ENCODE measurements at regions of chr11 and their contacts with region 1.

Region 1: GRCh38 chr11:125592305-125593112 is at the start of gene STT3A:
- DNase-seq: peak; percentile 98 to 99 (median 99)
- H3K4me3 ChIP-seq: peak within 1 kb of the TSS; percentile 97 to 98
- H3K4me3 Mint-ChIP-seq: peak within 1 kb of the TSS; percentile 92 to 98 (median 94)
- H3K27ac ChIP-seq: peak within 1 kb of the TSS; percentile 96
- H3K27ac Mint-ChIP-seq: peak within 1 kb of the TSS; percentile 94 to 100 (median 98)
- H3K4me1 ChIP-seq: peaks cover 38% of the 10 kb centered on the region
- H3K4me1 Mint-ChIP-seq: peaks cover 32 to 59% (median 45%) of the 10 kb centered on the region in 4 donors
- H3K27me3 ChIP-seq: no peaks in the 10 kb centered on the region
- H3K27me3 Mint-ChIP-seq: no peaks in the 10 kb centered on the region
- total RNA-seq, gene STT3A: 133 to 138 TPM

Region 2: GRCh38 chr11:125514336-125515101 is 78.0 kb before region 1 on chr11:
- CTCF ChIA-PET with region 1: no interaction called
- POLR2A ChIA-PET with region 1: no interaction called
- intact Hi-C with region 1: loop called (anchors 1 kb)
- DNase-seq: peak; percentile 63 to 84 (median 68)
- H3K4me3 ChIP-seq: no peak overlapping the region
- H3K4me3 Mint-ChIP-seq: peak overlapping the region in 7 of 8 donors; percentile 6 to 70 (median 56)
- H3K27ac ChIP-seq: peak overlapping the region; percentile 76
- H3K27ac Mint-ChIP-seq: peak overlapping the region; percentile 88 to 98 (median 95)
- H3K4me1 ChIP-seq: peaks cover 27% of the 10 kb centered on the region
- H3K4me1 Mint-ChIP-seq: peaks cover 23 to 38% (median 27%) of the 10 kb centered on the region in 4 donors
- H3K27me3 ChIP-seq: no peaks in the 10 kb centered on the region
- H3K27me3 Mint-ChIP-seq: no peaks in the 10 kb centered on the region

Region 3: GRCh38 chr11:125532668-125533067 is 59.8 kb before region 1 on chr11:
- CTCF ChIA-PET with region 1: no interaction called
- POLR2A ChIA-PET with region 1: no interaction called
- intact Hi-C with region 1: no loop called
- DNase-seq: no peak
- H3K4me3 ChIP-seq: no peak overlapping the region
- H3K4me3 Mint-ChIP-seq: no peak overlapping the region
- H3K27ac ChIP-seq: no peak overlapping the region
- H3K27ac Mint-ChIP-seq: no peak overlapping the region
- H3K4me1 ChIP-seq: no peaks in the 10 kb centered on the region
- H3K4me1 Mint-ChIP-seq: peaks cover 0 to 3% (median 0%) of the 10 kb centered on the region in 4 donors
- H3K27me3 ChIP-seq: no peaks in the 10 kb centered on the region
- H3K27me3 Mint-ChIP-seq: peaks cover 4 to 14% of the 10 kb centered on the region in 2 donors

Region 4: GRCh38 chr11:125603207-125603606 is 10.7 kb after region 1 on chr11:
- CTCF ChIA-PET with region 1: interaction called, 3 read pairs
- POLR2A ChIA-PET with region 1: interaction called, 11 read pairs
- intact Hi-C with region 1: no loop called
- DNase-seq: no peak
- H3K4me3 ChIP-seq: no peak overlapping the region
- H3K4me3 Mint-ChIP-seq: no peak overlapping the region
- H3K27ac ChIP-seq: no peak overlapping the region
- H3K27ac Mint-ChIP-seq: peak overlapping the region in 2 of 7 donors; percentile 10 to 25
- H3K4me1 ChIP-seq: no peaks in the 10 kb centered on the region
- H3K4me1 Mint-ChIP-seq: peaks cover 0 to 8% (median 3%) of the 10 kb centered on the region in 4 donors
- H3K27me3 ChIP-seq: no peaks in the 10 kb centered on the region
- H3K27me3 Mint-ChIP-seq: no peaks in the 10 kb centered on the region

Region 5: DNA sequence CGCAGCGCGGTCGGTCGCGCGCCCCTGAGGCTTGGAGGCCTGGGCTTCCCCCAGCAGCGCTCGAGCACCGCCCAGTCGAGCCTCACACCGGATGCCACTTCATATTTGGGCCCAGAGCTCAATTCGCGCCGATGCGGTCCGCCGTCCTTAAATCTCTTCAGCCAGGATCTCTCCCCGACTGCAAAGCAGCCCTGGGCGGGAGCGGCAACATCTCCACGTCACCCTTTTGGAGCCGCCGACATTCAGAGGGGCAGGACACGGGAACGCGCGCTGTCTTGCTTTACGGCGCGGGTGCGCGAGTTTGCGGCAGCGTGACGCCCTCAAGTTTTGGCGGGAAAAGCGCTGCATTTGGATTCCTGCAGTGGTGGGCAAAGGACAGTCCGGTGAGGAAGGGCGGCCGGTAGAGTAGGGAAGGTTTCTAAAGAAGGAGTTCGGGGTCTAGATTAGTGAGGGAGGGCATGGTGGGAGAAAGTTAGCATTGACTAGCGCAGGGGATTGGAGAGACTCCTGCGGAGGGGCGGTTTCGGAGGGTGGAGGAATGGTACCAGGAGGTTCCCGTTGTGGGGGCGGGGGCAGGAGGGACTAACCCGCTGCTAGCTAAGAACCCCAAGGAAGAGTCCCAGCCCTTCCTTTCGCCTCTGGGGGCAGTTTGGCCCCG is 33.2 kb after region 1 on chr11:
- CTCF ChIA-PET with region 1: interaction called, 16 read pairs
- POLR2A ChIA-PET with region 1: interaction called, 76 read pairs
- intact Hi-C with region 1: loop called (anchors 1 kb)
- DNase-seq: peak; percentile 81 to 88 (median 85)
- H3K4me3 ChIP-seq: peak overlapping the region; percentile 84 to 98
- H3K4me3 Mint-ChIP-seq: peak overlapping the region; percentile 93 to 100 (median 98)
- H3K27ac ChIP-seq: peak overlapping the region; percentile 95
- H3K27ac Mint-ChIP-seq: peak overlapping the region; percentile 87 to 99 (median 99)
- H3K4me1 ChIP-seq: peaks cover 19% of the 10 kb centered on the region
- H3K4me1 Mint-ChIP-seq: peaks cover 11 to 29% (median 16%) of the 10 kb centered on the region in 4 donors
- H3K27me3 ChIP-seq: no peaks in the 10 kb centered on the region
- H3K27me3 Mint-ChIP-seq: no peaks in the 10 kb centered on the region

Region 6: GRCh38 chr11:125902927-125903710 is 310.6 kb after region 1 on chr11 and contains the start of gene PUS3:
- CTCF ChIA-PET with region 1: no interaction called
- POLR2A ChIA-PET with region 1: interaction called, 7 read pairs
- intact Hi-C with region 1: loop called (anchors 1 kb)
- DNase-seq: peak; percentile 83 to 88 (median 84)
- H3K4me3 ChIP-seq: peak within 1 kb of the TSS; percentile 45 to 58
- H3K4me3 Mint-ChIP-seq: peak within 1 kb of the TSS; percentile 92 to 97 (median 95)
- H3K27ac ChIP-seq: peak within 1 kb of the TSS; percentile 81
- H3K27ac Mint-ChIP-seq: peak within 1 kb of the TSS; percentile 88 to 96 (median 92)
- H3K4me1 ChIP-seq: peaks cover 18% of the 10 kb centered on the region
- H3K4me1 Mint-ChIP-seq: peaks cover 20 to 49% (median 37%) of the 10 kb centered on the region in 4 donors
- H3K27me3 ChIP-seq: peaks cover 12% of the 10 kb centered on the region
- H3K27me3 Mint-ChIP-seq: peaks cover 19 to 22% of the 10 kb centered on the region in 2 donors
- total RNA-seq, gene PUS3: 12.4 to 12.6 TPM

Region 7: DNA sequence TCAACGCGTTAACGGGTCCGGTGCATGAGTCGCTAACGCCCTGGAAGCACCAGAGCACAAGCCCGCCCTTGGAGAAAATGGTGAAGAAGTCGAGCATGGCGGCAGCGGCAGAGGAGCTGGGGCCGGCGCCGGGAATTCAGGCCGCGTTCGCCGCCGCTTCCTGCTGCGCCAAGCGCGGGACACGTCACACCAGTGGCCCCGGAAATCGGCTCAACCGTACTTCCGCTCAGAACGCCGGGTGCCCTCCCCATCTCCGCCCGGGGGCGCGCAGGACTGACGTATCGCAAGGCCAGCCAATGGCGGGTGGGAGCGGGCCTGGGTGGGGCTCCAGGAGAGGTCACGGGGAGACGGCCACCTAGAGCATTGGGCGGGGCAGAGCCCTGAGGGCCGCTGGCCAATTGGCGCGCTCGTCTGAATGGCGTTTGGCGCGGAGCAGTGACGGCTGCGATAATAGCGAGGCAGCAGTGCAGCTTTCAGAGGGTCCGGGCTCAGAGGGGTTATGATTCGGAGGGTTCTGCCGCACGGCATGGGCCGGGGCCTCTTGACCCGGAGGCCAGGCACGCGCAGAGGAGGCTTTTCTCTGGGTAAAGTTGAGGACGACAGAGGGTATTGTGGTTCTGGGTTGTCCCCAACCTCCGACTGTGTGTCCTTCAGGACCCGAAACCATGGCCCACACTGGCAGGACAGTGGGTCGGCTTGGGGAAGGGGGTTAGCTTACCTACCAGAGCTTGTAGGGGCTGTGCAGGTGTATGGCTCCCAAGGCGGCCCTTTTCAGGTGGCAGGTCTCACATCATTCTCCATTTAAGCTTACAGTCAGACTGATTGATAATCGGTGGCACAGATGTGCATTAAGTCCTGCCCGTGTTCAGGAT is 676.4 kb after region 1 on chr11 and contains the starts of genes FOXRED1 and SRPRA:
- CTCF ChIA-PET with region 1: no interaction called
- POLR2A ChIA-PET with region 1: interaction called, 6 read pairs
- intact Hi-C with region 1: loop called (anchors 10 kb)
- DNase-seq: peak; percentile 100
- H3K4me3 ChIP-seq: peak within 1 kb of the TSS; percentile 84 to 96
- H3K4me3 Mint-ChIP-seq: peak within 1 kb of the TSS; percentile 95 to 99 (median 96)
- H3K27ac ChIP-seq: peak within 1 kb of the TSS; percentile 83
- H3K27ac Mint-ChIP-seq: peak within 1 kb of the TSS; percentile 94 to 99 (median 99)
- H3K4me1 ChIP-seq: peaks cover 26% of the 10 kb centered on the region
- H3K4me1 Mint-ChIP-seq: peaks cover 19 to 43% (median 24%) of the 10 kb centered on the region in 4 donors
- H3K27me3 ChIP-seq: no peaks in the 10 kb centered on the region
- H3K27me3 Mint-ChIP-seq: no peaks in the 10 kb centered on the region
- total RNA-seq, gene FOXRED1: 30.5 to 32.5 TPM
- total RNA-seq, gene SRPRA: 171 to 176 TPM